ENCODE measurements at regions of chr5 and their contacts with region 1.

Region 1: DNA sequence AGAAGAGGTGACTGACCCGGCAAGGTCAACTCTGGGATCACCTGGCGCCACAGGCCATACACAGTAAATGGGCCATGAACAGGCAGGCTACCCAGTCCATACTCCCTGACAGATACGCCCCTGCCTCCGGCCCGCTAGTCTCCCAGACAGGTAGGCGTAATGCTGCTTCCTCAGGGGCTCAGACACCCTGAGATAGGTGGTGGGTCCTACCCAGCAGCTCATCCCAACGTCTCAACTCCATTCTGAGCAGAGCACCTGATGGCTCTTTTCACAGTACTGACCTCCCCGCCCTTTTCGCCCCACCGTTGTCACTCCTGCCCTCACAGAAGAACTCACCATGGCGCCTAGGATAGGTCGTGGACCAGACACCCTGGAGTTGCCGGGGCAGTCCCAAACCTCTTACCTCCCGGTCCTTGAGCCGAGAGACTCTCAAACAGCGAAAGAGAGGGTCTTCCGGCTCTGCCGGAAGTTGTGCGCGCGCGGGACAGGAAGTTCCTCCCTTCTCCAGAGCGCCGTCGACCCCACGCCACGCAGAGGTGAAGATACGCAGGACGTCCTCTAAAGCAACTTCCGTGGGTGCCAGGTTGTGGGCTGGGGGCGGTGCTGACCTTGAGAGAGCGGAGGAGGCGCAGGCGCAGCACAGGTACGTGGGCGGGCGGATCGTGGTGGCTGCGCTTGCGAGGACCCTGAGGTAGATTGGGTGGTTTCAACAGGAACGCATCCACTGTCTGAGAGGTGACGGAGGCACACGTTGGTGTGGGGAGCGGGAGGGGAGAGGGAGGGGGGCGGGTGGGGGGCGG is at the start of gene TMEM161B:
- DNase-seq: peak; percentile 96
- ATAC-seq: peak; percentile 98
- H3K4me3 Mint-ChIP-seq: peak within 1 kb of the TSS; percentile 95
- H3K27ac Mint-ChIP-seq: peak within 1 kb of the TSS; percentile 96
- H3K4me1 Mint-ChIP-seq: peaks cover 48% of the 10 kb centered on the region
- H3K27me3 Mint-ChIP-seq: no peaks in the 10 kb centered on the region
- total RNA-seq, gene TMEM161B: 20.1 to 24.0 TPM

Region 2: GRCh38 chr5:87951661-87952060 is 316.9 kb before region 1 on chr5:
- CTCF ChIA-PET with region 1: no interaction called
- POLR2A ChIA-PET with region 1: no interaction called
- intact Hi-C with region 1: no loop called
- DNase-seq: no peak
- ATAC-seq: no peak
- H3K4me3 Mint-ChIP-seq: no peak overlapping the region
- H3K27ac Mint-ChIP-seq: no peak overlapping the region
- H3K4me1 Mint-ChIP-seq: no peaks in the 10 kb centered on the region
- H3K27me3 Mint-ChIP-seq: peaks cover 3% of the 10 kb centered on the region

Region 3: GRCh38 chr5:88207575-88207974 is 61.0 kb before region 1 on chr5:
- CTCF ChIA-PET with region 1: no interaction called
- POLR2A ChIA-PET with region 1: no interaction called
- intact Hi-C with region 1: loop called in 1 of 2 experiments (anchors 5 kb)
- DNase-seq: no peak
- ATAC-seq: no peak
- H3K4me3 Mint-ChIP-seq: no peak overlapping the region
- H3K27ac Mint-ChIP-seq: no peak overlapping the region
- H3K4me1 Mint-ChIP-seq: peaks cover 13% of the 10 kb centered on the region
- H3K27me3 Mint-ChIP-seq: no peaks in the 10 kb centered on the region

Region 4: GRCh38 chr5:88251048-88251711 is 17.4 kb before region 1 on chr5:
- CTCF ChIA-PET with region 1: no interaction called
- POLR2A ChIA-PET with region 1: no interaction called
- intact Hi-C with region 1: loop called in 1 of 2 experiments (anchors 2 kb)
- DNase-seq: peak; percentile 44
- ATAC-seq: peak; percentile 95
- H3K4me3 Mint-ChIP-seq: no peak overlapping the region
- H3K27ac Mint-ChIP-seq: peak overlapping the region; percentile 65
- H3K4me1 Mint-ChIP-seq: peaks cover 63% of the 10 kb centered on the region
- H3K27me3 Mint-ChIP-seq: no peaks in the 10 kb centered on the region

Region 5: GRCh38 chr5:88452820-88453219 is 184.2 kb after region 1 on chr5:
- CTCF ChIA-PET with region 1: no interaction called
- POLR2A ChIA-PET with region 1: no interaction called
- intact Hi-C with region 1: no loop called
- DNase-seq: no peak
- ATAC-seq: no peak
- H3K4me3 Mint-ChIP-seq: no peak overlapping the region
- H3K27ac Mint-ChIP-seq: no peak overlapping the region
- H3K4me1 Mint-ChIP-seq: no peaks in the 10 kb centered on the region
- H3K27me3 Mint-ChIP-seq: peaks cover 9% of the 10 kb centered on the region

Region 6: DNA sequence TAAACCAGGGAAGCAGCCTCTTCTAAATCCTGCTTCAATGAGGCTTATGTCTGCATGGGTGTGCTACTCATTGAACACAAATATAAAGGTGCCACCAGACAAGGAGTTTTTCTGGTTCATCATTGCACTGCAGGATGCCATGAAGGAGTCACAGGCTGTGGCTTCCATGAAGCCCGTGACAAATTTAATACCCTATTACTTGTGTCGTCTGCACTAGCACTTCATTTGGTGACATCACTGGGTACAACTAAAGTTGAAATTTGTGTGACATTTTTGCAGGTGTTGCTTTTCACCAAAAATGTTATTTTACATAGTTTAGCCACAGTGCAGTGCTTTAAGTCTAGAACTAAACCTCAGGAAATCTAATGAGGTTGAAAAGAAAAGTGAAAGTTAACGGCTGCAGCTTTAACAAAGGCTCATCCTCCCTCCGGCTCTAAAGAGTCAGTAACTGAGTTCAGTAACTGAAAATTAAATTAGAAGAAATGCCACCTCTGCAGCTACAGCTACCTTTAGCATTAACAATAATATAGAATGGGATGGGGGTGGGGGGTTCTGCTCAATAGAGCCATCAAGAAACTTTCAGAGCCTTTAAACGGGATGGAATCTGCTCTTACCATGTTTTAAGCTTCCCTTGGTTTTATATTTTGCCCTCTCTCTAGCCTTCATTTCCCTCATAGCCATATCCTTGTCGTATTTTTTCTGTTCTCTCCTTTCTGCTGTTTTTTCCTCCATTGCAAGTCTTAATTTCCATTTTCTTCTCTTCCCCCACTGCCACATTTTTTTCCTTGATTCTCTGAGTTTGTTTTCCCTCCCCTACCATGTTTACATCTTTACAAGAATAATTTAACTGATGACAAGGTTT is 233.8 kb after region 1 on chr5:
- CTCF ChIA-PET with region 1: no interaction called
- POLR2A ChIA-PET with region 1: no interaction called
- intact Hi-C with region 1: loop called in 1 of 2 experiments (anchors 5 kb)
- DNase-seq: peak; percentile 8
- ATAC-seq: peak; percentile 77
- H3K4me3 Mint-ChIP-seq: peak overlapping the region; percentile 76
- H3K27ac Mint-ChIP-seq: peak overlapping the region; percentile 87
- H3K4me1 Mint-ChIP-seq: peaks cover 10% of the 10 kb centered on the region
- H3K27me3 Mint-ChIP-seq: peaks cover 1% of the 10 kb centered on the region

Region 7: GRCh38 chr5:88660947-88661805 is 392.6 kb after region 1 on chr5:
- CTCF ChIA-PET with region 1: interaction called, 3 read pairs
- POLR2A ChIA-PET with region 1: no interaction called
- intact Hi-C with region 1: loop called in 1 of 2 experiments (anchors 5 kb)
- DNase-seq: peak; percentile 71
- ATAC-seq: peak; percentile 72
- H3K4me3 Mint-ChIP-seq: peak overlapping the region; percentile 43
- H3K27ac Mint-ChIP-seq: no peak overlapping the region
- H3K4me1 Mint-ChIP-seq: peaks cover 16% of the 10 kb centered on the region
- H3K27me3 Mint-ChIP-seq: peaks cover 54% of the 10 kb centered on the region

Measured in activated CD4-positive, alpha-beta T cell treated with anti-CD3 and anti-CD28 coated beads for 36 hours (primary cell).